ENCODE measurements at regions of chr2 and their contacts with region 1.

Region 1: GRCh38 chr2:45748239-45748638 is 96.8 kb downstream of the PRKCE start:
- DNase-seq: no peak
- H3K4me3 ChIP-seq: no peak overlapping the region
- H3K27ac ChIP-seq: no peak overlapping the region
- H3K4me1 ChIP-seq: no peaks in the 10 kb centered on the region
- H3K27me3 ChIP-seq: no peaks in the 10 kb centered on the region
- CTCF ChIP-seq: no peak

Region 2: DNA sequence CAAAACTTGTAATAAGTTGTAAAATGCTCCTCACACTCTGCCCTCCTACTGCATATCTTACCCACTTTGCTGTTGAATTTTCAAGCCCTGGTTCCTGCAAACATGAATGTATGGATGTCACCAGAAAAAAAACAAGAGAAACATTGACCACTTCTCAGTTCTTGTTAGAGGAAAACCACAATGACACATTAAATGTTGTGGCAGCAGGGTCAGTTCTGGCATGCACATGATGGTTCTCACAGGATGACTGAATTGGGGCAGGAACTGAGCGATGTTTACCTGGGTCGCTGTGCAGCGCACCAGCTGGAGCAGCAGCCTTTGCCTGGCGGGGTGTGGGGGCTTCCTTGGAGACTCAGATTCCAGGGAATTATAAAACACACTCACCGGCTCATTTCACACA is 110.8 kb before region 1 on chr2:
- CTCF ChIA-PET with region 1: no interaction called
- dilution Hi-C with region 1: no loop called
- in situ Hi-C with region 1: no loop called
- intact Hi-C with region 1: no loop called
- DNase-seq: peak; percentile 80
- H3K4me3 ChIP-seq: no peak overlapping the region
- H3K27ac ChIP-seq: no peak overlapping the region
- H3K4me1 ChIP-seq: peaks cover 12% of the 10 kb centered on the region
- H3K27me3 ChIP-seq: peaks cover 4% of the 10 kb centered on the region
- CTCF ChIP-seq: no peak

Region 3: DNA sequence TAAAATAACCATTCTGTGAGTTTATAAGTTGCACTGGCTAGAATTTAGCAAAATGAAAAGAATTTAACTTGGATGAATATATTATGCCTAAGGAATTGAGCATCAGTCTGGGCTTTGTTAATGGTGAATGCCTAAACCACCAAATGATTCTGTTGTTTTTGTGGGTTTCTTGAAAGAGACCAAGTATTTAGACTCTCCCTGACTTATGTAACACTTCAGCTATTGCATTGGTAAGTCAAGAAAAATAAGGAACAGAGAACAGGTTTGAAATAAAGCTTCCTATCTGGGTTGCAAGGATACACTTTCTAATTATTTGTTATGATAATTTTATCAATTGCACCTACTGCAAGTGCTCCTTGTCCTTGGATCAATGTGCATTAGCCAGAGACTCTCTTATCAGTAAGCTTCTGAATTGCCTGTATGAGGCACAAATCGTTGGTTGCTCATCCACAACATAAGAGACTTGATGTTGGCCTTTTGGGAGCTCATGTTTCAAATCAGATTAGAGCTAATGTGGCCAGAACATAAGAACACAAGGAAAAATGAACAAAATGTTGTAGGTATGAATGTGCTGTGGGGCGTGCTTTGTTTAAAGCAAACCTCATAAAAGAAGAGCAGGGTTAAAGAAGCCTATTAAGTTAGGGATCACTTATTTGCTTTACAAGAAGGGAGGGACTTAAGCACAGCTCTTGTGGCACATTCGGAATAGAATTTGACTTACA is 59.6 kb before region 1 on chr2:
- CTCF ChIA-PET with region 1: no interaction called
- dilution Hi-C with region 1: loop called (anchors 5 kb)
- in situ Hi-C with region 1: no loop called
- intact Hi-C with region 1: no loop called
- DNase-seq: no peak
- H3K4me3 ChIP-seq: no peak overlapping the region
- H3K27ac ChIP-seq: no peak overlapping the region
- H3K4me1 ChIP-seq: no peaks in the 10 kb centered on the region
- H3K27me3 ChIP-seq: no peaks in the 10 kb centered on the region
- CTCF ChIP-seq: no peak